MCF 10A (cell line): ENCODE measurements at regions of chr2 and their contacts with region 1.

Region 1: DNA sequence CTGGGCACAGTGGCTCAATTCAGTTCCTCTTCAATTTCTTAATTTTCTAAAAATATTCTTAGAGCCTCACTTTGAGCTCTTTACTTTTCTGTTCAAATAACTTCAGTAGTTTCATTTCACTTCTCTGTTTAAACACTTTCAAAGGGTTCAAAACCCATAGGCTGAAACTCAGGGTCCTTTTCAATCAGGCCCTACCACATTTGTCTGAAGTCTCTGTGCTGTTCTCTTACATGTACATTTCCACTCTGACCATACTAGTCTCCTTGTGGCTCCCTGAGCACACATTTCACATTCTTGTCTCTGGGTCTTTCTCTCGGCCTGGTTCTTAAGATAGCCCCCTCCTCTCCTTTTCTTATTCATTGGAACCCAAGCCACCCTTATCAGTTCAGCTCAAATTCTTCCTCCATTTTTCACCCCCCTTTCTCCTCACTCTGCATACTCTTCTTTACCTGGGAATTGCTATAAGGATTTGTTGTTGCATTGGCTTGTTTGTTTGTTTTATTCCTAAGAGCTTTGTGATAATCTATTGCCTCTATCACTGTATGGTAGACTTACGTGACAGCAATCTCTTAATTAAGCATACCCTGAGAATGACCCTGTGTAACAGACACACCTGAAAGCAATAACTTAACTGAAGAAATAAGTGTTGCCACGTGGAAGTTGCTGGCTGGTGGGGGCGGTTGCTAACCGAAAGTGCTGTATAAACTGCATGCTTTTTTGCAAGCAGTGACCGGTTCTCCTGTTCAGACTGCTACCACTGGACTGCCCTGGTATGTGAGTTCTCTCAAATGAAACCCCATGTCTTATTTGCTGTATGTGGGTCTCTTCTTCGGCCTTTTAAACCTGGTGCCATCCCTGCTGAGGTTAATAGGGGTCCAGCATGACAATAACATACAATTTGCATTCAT is 27.7 kb upstream of the ACADL start:
- DNase-seq: no peak
- H3K4me3 Mint-ChIP-seq: no peak overlapping the region
- H3K27ac Mint-ChIP-seq: no peak overlapping the region
- H3K4me1 Mint-ChIP-seq: no peaks in the 10 kb centered on the region
- H3K27me3 Mint-ChIP-seq: no peaks in the 10 kb centered on the region
- CTCF ChIP-seq: no peak

Region 2: GRCh38 chr2:209638346-209638745 is 614.6 kb before region 1 on chr2:
- CTCF ChIA-PET with region 1: no interaction called
- POLR2A ChIA-PET with region 1: no interaction called
- intact Hi-C with region 1: no loop called
- DNase-seq: peak; percentile 60
- H3K4me3 Mint-ChIP-seq: no peak overlapping the region
- H3K27ac Mint-ChIP-seq: peak overlapping the region; percentile 35
- H3K4me1 Mint-ChIP-seq: peaks cover 42% of the 10 kb centered on the region
- H3K27me3 Mint-ChIP-seq: no peaks in the 10 kb centered on the region
- CTCF ChIP-seq: no peak

Region 3: DNA sequence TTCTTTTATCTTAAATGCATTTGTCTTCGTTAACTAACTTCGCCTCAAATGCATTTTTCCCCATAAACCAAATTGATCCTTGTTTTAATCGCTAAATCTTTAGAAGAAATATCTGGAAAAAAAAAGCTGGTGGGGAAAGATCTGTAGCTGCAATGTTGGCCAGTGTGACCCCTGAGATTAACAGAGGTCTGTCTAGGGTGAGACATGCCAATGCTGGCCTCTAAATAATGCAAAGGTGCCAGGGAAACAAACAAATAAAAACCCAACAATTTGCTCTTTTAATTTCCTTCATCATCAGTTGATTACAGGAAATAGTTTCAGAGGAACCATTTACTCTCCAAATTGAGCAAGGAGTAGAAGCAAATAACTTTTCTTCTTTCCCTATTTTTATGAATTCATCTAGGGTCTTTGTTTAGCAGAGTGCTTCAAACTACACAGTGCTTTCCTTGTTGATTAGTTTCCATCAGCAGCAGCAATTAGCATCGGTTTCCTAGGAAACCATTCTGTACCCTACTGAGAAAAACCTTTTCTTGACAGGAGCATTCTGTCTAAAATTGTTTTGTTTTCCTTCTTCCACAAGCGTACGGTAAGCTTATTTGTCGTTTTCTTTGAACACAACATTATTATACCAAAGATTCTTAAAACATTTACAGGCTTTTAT is 581.8 kb before region 1 on chr2:
- CTCF ChIA-PET with region 1: no interaction called
- POLR2A ChIA-PET with region 1: no interaction called
- intact Hi-C with region 1: no loop called
- DNase-seq: no peak
- H3K4me3 Mint-ChIP-seq: no peak overlapping the region
- H3K27ac Mint-ChIP-seq: no peak overlapping the region
- H3K4me1 Mint-ChIP-seq: no peaks in the 10 kb centered on the region
- H3K27me3 Mint-ChIP-seq: no peaks in the 10 kb centered on the region
- CTCF ChIP-seq: no peak

Region 4: GRCh38 chr2:210370562-210370961 is 117.6 kb after region 1 on chr2:
- CTCF ChIA-PET with region 1: interaction called, 11 read pairs
- POLR2A ChIA-PET with region 1: no interaction called
- intact Hi-C with region 1: no loop called
- DNase-seq: no peak
- H3K4me3 Mint-ChIP-seq: no peak overlapping the region
- H3K27ac Mint-ChIP-seq: no peak overlapping the region
- H3K4me1 Mint-ChIP-seq: no peaks in the 10 kb centered on the region
- H3K27me3 Mint-ChIP-seq: peaks cover 12% of the 10 kb centered on the region
- CTCF ChIP-seq: no peak

Region 5: DNA sequence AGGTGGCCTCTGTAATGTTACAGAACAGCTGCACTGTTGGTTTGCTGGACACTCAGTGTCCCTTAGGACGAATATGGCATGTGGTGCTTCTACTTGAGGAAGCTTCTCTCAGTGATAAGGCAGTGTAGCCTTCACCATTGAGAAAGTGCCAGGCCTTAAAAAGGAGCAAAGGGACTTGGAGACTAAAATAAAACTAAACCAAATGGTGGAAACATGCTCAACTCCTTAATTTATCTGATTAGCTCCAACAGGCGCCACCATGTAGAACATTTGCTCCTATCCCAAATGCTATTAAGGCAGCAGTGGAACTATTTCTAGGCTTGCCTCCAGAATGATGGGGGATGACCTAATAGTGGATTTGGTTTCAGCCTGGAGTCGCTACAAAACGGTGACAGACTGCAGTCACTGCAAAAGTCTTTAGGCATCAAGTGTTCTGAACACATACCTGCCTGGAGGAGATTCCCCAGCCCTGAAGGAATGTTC is 139.6 kb after region 1 on chr2:
- CTCF ChIA-PET with region 1: interaction called, 23 read pairs
- POLR2A ChIA-PET with region 1: no interaction called
- intact Hi-C with region 1: no loop called
- DNase-seq: no peak
- H3K4me3 Mint-ChIP-seq: no peak overlapping the region
- H3K27ac Mint-ChIP-seq: no peak overlapping the region
- H3K4me1 Mint-ChIP-seq: no peaks in the 10 kb centered on the region
- H3K27me3 Mint-ChIP-seq: peaks cover 13% of the 10 kb centered on the region
- CTCF ChIP-seq: no peak

Region 6: DNA sequence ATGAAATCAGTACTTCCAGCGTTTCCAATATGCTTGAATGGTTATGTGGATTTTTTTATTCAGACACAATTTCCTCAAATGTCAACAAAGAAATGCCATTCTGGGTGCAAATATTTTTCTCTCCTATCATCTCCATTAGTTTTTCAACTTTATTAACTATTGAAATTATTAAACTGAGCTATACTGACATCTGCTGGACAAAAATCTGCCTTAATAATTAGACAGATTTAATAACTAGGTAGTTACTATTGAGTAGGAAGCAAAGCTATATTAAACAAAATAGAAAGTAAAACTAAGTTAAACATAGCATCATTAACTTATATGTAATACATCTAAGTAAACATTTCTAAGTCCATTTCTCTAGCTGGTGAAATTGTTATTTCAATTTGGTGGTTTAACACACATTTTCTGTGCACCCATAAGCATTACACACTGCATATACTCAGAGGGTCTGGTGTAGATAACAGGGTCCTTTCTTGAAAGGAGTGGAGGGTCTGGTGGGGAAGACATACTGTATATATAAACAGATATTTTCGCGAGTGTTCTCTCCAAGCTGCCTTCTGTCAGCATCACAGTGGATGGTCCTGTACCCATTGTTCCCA is 146.6 kb after region 1 on chr2:
- CTCF ChIA-PET with region 1: interaction called, 152 read pairs
- POLR2A ChIA-PET with region 1: no interaction called
- intact Hi-C with region 1: loop called (anchors 1 kb)
- DNase-seq: peak; percentile 28
- H3K4me3 Mint-ChIP-seq: no peak overlapping the region
- H3K27ac Mint-ChIP-seq: no peak overlapping the region
- H3K4me1 Mint-ChIP-seq: no peaks in the 10 kb centered on the region
- H3K27me3 Mint-ChIP-seq: peaks cover 40% of the 10 kb centered on the region
- CTCF ChIP-seq: peak; percentile 27

Region 7: DNA sequence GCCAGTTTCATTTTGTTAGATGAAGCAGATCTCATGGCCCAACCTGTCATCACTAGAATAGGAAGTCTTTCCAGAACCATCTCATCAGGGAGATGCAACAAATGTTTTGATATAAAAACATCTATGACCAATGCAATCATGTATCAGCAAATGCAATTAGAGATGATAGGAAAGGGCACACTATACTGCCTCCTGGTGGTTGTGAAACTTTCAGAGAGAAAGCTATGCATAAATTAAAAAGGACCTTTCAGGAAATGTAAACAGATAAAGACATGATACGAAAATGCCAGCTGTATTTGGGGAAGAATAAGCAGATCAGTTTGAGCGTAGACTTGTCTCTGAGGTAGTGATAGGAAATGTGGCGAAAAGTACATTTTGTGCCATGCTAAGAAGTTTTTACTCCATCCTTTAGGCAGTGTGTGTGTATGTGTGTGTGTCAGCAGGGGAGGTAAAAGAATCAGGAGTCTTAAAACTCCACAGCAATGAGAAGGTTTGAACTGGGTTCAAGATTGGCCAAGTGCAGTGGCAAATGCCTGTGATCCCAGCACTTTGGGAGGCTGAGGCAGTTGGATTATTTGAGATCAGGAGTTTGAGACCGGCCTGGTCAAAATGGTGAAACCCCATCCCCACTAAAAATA is 782.7 kb after region 1 on chr2:
- CTCF ChIA-PET with region 1: interaction called, 4 read pairs
- POLR2A ChIA-PET with region 1: no interaction called
- intact Hi-C with region 1: loop called (anchors 2 kb)
- DNase-seq: peak; percentile 58
- H3K4me3 Mint-ChIP-seq: no peak overlapping the region
- H3K27ac Mint-ChIP-seq: no peak overlapping the region
- H3K4me1 Mint-ChIP-seq: peaks cover 6% of the 10 kb centered on the region
- H3K27me3 Mint-ChIP-seq: peaks cover 81% of the 10 kb centered on the region
- CTCF ChIP-seq: peak; percentile 43

Region 8: GRCh38 chr2:211157856-211158463 is 905.0 kb after region 1 on chr2:
- CTCF ChIA-PET with region 1: no interaction called
- POLR2A ChIA-PET with region 1: no interaction called
- intact Hi-C with region 1: loop called (anchors 2 kb)
- DNase-seq: peak; percentile 80
- H3K4me3 Mint-ChIP-seq: no peak overlapping the region
- H3K27ac Mint-ChIP-seq: no peak overlapping the region
- H3K4me1 Mint-ChIP-seq: no peaks in the 10 kb centered on the region
- H3K27me3 Mint-ChIP-seq: peaks cover 72% of the 10 kb centered on the region
- CTCF ChIP-seq: peak; percentile 68